Adrenal gland (tissue), 19 donors: ENCODE measurements at regions of chr15 and their contacts with region 1.

Region 1: DNA sequence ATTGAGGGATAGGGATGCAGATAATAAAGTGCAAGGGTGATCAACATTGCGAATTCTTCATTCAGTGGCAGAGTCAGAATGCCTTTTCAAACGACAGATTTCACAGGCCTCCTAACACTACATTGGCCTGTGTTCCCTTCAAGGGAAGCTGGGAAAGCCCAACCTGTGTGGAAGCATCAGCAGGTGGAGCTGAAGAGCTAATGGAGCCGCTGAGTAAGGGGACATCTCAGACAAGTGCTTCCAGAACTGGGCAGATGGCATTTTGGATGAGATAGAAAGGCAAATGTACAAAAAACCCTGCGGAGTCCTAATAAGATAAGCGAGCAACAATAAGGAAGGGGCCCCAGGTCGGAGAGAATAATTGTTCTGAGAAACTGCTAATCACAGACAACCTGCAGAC is 8.5 kb upstream of the SLC24A5 start:
- DNase-seq: peak in 6 of 7 donors; percentile 22 to 59 (median 28)
- H3K4me3 ChIP-seq: no peak overlapping the region
- H3K27ac ChIP-seq: no peak overlapping the region
- H3K4me1 ChIP-seq: no peaks in the 10 kb centered on the region
- H3K27me3 ChIP-seq: no peaks in the 10 kb centered on the region
- CTCF ChIP-seq: peak in 5 of 6 experiments; percentile 30 to 39 (median 37)
- POLR2A ChIP-seq: no peak

Region 2: DNA sequence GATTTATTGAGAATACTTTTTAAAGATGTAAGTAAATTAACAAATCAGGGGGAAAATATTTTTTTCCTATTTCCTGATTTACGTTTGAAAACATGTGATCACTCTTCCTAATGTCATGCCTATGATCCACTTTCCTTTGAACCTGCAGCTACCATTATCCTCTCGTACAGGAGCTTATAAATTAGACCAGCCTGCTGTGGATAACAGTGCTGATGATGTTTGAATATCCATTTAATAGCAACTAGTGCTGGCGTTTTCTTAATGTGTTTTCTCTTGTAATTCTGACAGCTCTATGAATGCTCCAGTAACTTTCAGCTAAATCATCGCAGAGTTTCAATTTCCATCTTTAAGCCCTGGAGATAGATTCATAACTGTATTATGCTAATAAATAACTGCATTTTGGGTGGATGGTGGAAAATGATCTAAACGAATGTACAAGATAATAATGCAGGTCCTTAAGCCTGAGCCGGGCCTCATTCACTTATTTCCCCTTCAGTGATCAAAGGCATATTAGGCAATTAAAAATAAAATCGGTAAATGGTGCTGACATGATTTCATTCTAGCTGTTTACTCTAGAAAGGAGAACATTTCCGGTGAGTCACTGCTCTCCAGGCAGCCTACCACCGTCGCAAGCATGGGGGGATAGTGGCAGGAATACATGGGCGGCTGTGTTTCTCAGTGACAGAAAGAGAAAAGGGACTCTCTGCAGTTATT is 49.9 kb before region 1 on chr15:
- intact Hi-C with region 1: no loop called
- DNase-seq: no peak
- H3K4me3 ChIP-seq: no peak overlapping the region
- H3K27ac ChIP-seq: no peak overlapping the region
- H3K4me1 ChIP-seq: no peaks in the 10 kb centered on the region
- H3K27me3 ChIP-seq: no peaks in the 10 kb centered on the region
- CTCF ChIP-seq: no peak
- POLR2A ChIP-seq: no peak

Region 3: GRCh38 chr15:48244921-48245320 is 132.7 kb after region 1 on chr15:
- intact Hi-C with region 1: loop called in 1 of 2 experiments (anchors 10 kb)
- DNase-seq: no peak
- H3K4me3 ChIP-seq: no peak overlapping the region
- H3K27ac ChIP-seq: no peak overlapping the region
- H3K4me1 ChIP-seq: no peaks in the 10 kb centered on the region
- H3K27me3 ChIP-seq: no peaks in the 10 kb centered on the region
- CTCF ChIP-seq: no peak
- POLR2A ChIP-seq: no peak

Region 4: GRCh38 chr15:48289628-48290027 is 177.4 kb after region 1 on chr15:
- intact Hi-C with region 1: no loop called
- DNase-seq: no peak
- H3K4me3 ChIP-seq: no peak overlapping the region
- H3K27ac ChIP-seq: no peak overlapping the region
- H3K4me1 ChIP-seq: peaks cover 0 to 8% of the 10 kb centered on the region in 2 donors
- H3K27me3 ChIP-seq: no peaks in the 10 kb centered on the region
- CTCF ChIP-seq: no peak
- POLR2A ChIP-seq: no peak

Region 5: GRCh38 chr15:48406913-48407312 is 294.7 kb after region 1 on chr15:
- intact Hi-C with region 1: no loop called
- DNase-seq: no peak
- H3K4me3 ChIP-seq: no peak overlapping the region
- H3K27ac ChIP-seq: peak overlapping the region in 1 of 5 donors; percentile 47
- H3K4me1 ChIP-seq: peaks cover 3 to 22% of the 10 kb centered on the region in 2 donors
- H3K27me3 ChIP-seq: no peaks in the 10 kb centered on the region
- CTCF ChIP-seq: no peak
- POLR2A ChIP-seq: no peak

Region 6: GRCh38 chr15:48423896-48424475 is 311.7 kb after region 1 on chr15:
- intact Hi-C with region 1: no loop called
- DNase-seq: no peak
- H3K4me3 ChIP-seq: no peak overlapping the region
- H3K27ac ChIP-seq: no peak overlapping the region
- H3K4me1 ChIP-seq: no peaks in the 10 kb centered on the region
- H3K27me3 ChIP-seq: no peaks in the 10 kb centered on the region
- CTCF ChIP-seq: no peak
- POLR2A ChIP-seq: no peak